ENCODE measurements at regions of chr13 and their contacts with region 1.

Region 1: GRCh38 chr13:41061075-41061913 is at the start of gene WBP4:
- DNase-seq: peak; percentile 89
- ATAC-seq: peak; percentile 82
- H3K4me3 ChIP-seq: peak within 1 kb of the TSS; percentile 84 to 96 (median 90)
- H3K27ac ChIP-seq: peak within 1 kb of the TSS; percentile 98
- H3K4me1 ChIP-seq: peaks cover 52% of the 10 kb centered on the region
- H3K27me3 ChIP-seq: no peaks in the 10 kb centered on the region; a peak in 1 of 5 replicates
- CTCF ChIP-seq: no peak
- EP300 ChIP-seq: peak; percentile 64 to 76
- POLR2A ChIP-seq: peak; percentile 98
- RAD21 ChIP-seq: 0 out of 2 replicates have a peak, but pooled peaks have one; percentile 32
- total RNA-seq, gene WBP4: 11.7 and 16.8 TPM in 2 replicates

Region 2: DNA sequence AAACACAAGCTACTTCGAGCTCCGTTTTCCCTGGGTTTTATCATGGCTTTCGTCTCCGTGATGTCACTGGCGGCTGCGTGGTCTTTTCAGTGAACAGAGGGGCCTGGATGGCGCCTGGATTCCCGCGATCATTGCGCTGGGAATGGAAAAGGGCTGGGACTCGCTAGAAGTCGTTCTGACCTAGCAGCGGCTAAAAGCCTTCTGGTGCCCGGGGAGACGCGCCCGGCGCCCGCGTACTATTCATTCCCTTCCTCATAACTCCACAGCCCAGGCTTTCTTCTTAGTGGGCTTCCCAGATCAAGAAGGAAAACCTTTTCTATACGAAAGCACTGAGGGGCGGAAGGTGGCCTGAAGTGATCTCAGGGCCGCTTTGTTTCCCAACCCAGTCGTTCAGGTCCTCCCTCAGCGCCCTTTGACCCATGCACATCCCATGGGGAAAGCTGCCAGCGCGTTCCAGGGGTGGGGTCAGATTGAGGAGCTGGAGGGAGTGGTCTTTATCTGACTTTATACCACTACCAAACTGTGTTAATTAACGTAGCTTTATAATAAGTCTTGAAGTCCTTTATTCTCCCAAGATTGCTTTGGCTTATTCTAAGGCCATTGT is 138.8 kb before region 1 on chr13:
- CTCF ChIA-PET with region 1: no interaction called
- POLR2A ChIA-PET with region 1: interaction called, 11 read pairs
- in situ Hi-C with region 1: no loop called
- intact Hi-C with region 1: loop called (anchors 1 kb)
- DNase-seq: peak; percentile 10
- ATAC-seq: peak; percentile 19
- H3K4me3 ChIP-seq: no peak overlapping the region; a peak in 1 of 6 replicates
- H3K27ac ChIP-seq: no peak overlapping the region
- H3K4me1 ChIP-seq: peaks cover 27% of the 10 kb centered on the region
- H3K27me3 ChIP-seq: no peaks in the 10 kb centered on the region; a peak in 2 of 5 replicates
- CTCF ChIP-seq: no peak
- EP300 ChIP-seq: no peak
- POLR2A ChIP-seq: no peak
- RAD21 ChIP-seq: no peak

Region 3: GRCh38 chr13:41019011-41019487 is 42.2 kb before region 1 on chr13 and contains the start of gene ELF1:
- CTCF ChIA-PET with region 1: no interaction called
- POLR2A ChIA-PET with region 1: interaction called, 35 read pairs
- in situ Hi-C with region 1: no loop called
- intact Hi-C with region 1: loop called (anchors 5 kb)
- DNase-seq: peak; percentile 65
- ATAC-seq: peak; percentile 60
- H3K4me3 ChIP-seq: peak within 1 kb of the TSS; percentile 46 to 61 (median 55); a peak in 5 of 6 replicates
- H3K27ac ChIP-seq: peak within 1 kb of the TSS; percentile 87
- H3K4me1 ChIP-seq: peaks cover 92% of the 10 kb centered on the region
- H3K27me3 ChIP-seq: no peaks in the 10 kb centered on the region
- CTCF ChIP-seq: no peak
- EP300 ChIP-seq: no peak
- POLR2A ChIP-seq: peak in 1 of 2 experiments; percentile 0; a peak in 1 of 4 replicates
- RAD21 ChIP-seq: no peak
- total RNA-seq, gene ELF1: 71.5 and 91.5 TPM in 2 replicates

Region 4: DNA sequence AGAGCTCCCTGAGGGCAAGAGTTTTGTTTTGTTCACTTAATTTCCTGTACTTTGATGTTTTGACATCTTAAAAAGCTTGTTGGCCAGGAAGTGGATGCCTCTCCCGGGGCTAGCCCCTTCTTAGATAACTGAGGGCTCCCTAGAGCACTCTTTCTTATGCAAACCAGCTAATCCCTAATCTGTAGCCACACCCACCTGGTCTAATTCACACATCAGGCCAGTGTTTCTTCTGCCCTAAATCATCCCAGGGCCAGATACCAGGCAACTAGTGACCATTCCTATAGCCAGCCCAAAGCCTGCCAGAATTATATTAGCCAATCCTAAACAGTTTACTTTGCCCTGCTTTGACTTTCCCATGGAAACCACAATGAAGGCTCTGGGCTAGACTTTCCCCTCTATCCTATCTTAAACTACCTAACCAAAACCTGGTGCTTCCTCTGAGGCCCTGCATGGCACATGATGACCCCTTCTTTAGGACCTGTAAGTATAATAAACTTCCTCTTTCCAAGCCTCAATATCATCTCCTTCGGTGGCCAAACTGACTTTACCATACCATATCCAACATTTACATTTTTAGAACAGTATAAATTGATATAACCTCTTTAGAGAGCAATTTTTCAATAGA is 24.8 kb after region 1 on chr13:
- CTCF ChIA-PET with region 1: no interaction called
- POLR2A ChIA-PET with region 1: no interaction called
- in situ Hi-C with region 1: no loop called
- intact Hi-C with region 1: no loop called
- DNase-seq: no peak
- ATAC-seq: peak; percentile 31; the same call in 1 of the 3 replicates
- H3K4me3 ChIP-seq: no peak overlapping the region
- H3K27ac ChIP-seq: no peak overlapping the region
- H3K4me1 ChIP-seq: no peaks in the 10 kb centered on the region
- H3K27me3 ChIP-seq: no peaks in the 10 kb centered on the region
- CTCF ChIP-seq: no peak
- EP300 ChIP-seq: no peak
- POLR2A ChIP-seq: no peak
- RAD21 ChIP-seq: no peak

Region 5: DNA sequence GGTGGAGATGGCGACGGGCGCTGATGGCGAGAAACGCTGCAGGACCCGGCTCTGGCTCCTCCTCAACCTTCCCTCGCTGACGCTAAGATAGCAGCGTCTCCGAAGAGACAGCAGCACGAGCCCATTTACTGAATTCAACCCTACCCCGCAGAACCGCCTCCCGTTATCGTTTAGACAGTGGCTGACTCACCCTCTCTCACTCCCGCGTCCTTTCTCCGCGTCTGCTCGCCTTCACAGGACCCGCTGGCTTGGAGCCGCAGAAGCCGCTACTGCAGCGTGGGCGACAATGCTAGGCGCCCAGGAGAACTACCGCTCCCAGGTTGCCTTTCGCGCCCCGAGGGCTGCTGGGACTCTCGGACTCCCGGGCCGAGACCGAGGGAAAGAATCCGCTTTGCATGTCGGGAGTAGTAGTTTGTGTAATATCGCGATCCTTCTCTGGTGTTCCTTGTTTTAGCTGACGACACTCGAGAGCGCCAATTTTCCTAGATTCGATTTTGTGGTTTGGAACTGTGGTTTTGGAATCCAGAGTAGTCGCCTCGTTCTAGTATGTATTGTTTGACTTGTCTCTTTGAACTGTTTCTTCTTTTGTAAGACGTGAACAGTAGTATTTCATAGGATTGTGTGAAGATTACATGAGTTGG is 71.3 kb after region 1 on chr13 and contains the start of gene KBTBD6:
- CTCF ChIA-PET with region 1: no interaction called
- POLR2A ChIA-PET with region 1: interaction called, 4 read pairs
- in situ Hi-C with region 1: no loop called
- intact Hi-C with region 1: loop called (anchors 2 kb)
- DNase-seq: peak; percentile 97
- ATAC-seq: peak; percentile 98
- H3K4me3 ChIP-seq: peak within 1 kb of the TSS; percentile 76 to 89 (median 84)
- H3K27ac ChIP-seq: peak within 1 kb of the TSS; percentile 66
- H3K4me1 ChIP-seq: peaks cover 54% of the 10 kb centered on the region
- H3K27me3 ChIP-seq: no peaks in the 10 kb centered on the region
- CTCF ChIP-seq: peak; percentile 23; the same call in 1 of the 2 replicates
- EP300 ChIP-seq: peak in 1 of 2 experiments; percentile 46; a peak in 1 of 4 replicates
- POLR2A ChIP-seq: peak; percentile 82 to 88
- RAD21 ChIP-seq: 0 out of 2 replicates have a peak, but pooled peaks have one; percentile 22
- total RNA-seq, gene KBTBD6: 12.0 and 18.8 TPM in 2 replicates

Region 6: DNA sequence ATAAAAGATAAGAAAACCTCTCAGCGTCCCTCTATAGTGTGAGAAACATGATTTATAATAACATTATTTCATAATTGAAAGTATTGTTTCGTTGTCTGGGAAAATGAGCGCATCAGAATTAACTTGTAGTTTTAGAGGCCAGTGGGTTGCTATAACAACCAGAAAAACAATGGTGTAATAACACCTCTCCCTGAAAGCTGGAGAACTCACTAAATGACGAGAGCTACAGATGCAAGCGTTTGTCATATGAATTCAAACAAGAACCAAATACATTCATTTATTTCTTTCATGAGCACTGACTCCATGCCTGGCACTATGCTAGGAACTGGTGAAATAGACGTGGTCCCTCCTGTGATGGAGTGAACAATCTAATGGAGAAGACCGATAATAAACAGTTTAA is 116.7 kb after region 1 on chr13:
- CTCF ChIA-PET with region 1: no interaction called
- POLR2A ChIA-PET with region 1: no interaction called
- in situ Hi-C with region 1: no loop called
- intact Hi-C with region 1: no loop called
- DNase-seq: no peak
- ATAC-seq: no peak
- H3K4me3 ChIP-seq: no peak overlapping the region
- H3K27ac ChIP-seq: no peak overlapping the region
- H3K4me1 ChIP-seq: peaks cover 17% of the 10 kb centered on the region
- H3K27me3 ChIP-seq: no peaks in the 10 kb centered on the region
- CTCF ChIP-seq: no peak
- EP300 ChIP-seq: no peak
- POLR2A ChIP-seq: no peak
- RAD21 ChIP-seq: no peak

Region 7: GRCh38 chr13:41310963-41311606 is 249.8 kb after region 1 on chr13 and contains the start of gene NAA16:
- CTCF ChIA-PET with region 1: no interaction called
- POLR2A ChIA-PET with region 1: no interaction called
- in situ Hi-C with region 1: no loop called
- intact Hi-C with region 1: loop called (anchors 5 kb)
- DNase-seq: peak; percentile 72
- ATAC-seq: peak; percentile 88
- H3K4me3 ChIP-seq: peak within 1 kb of the TSS; percentile 94 to 99 (median 98)
- H3K27ac ChIP-seq: peak within 1 kb of the TSS; percentile 89
- H3K4me1 ChIP-seq: peaks cover 60% of the 10 kb centered on the region
- H3K27me3 ChIP-seq: no peaks in the 10 kb centered on the region; a peak in 1 of 5 replicates
- CTCF ChIP-seq: no peak
- EP300 ChIP-seq: no peak
- POLR2A ChIP-seq: peak; percentile 68 to 88
- RAD21 ChIP-seq: peak; percentile 48
- total RNA-seq, gene NAA16: 9.0 and 15.1 TPM in 2 replicates